ENCODE measurements at regions of chr20 and their contacts with region 1.

Region 1: DNA sequence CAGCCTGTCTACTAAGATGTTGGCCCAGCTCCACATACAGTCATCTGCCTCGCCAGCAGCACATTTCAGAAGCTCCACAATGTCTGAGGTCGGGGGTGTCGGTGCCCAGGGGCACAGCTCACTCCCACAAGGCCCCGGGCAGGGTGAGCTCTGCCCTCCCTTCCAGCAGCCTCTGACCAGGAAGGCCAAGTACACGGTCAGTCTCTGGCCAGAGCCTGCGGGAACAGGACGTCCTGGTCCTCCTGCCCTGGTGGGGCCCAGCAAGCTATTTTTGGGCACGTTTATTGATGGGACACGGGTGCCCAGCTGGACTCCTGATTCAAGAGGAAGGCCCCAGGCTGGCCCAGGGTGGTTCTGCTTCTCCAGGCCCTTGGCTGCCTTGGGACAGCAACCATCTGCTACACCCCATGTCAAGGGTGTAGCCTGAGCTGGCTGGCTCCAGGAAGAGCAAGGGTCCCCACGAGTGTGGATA is 114.9 kb upstream of the PTPN1 start:
- DNase-seq: peak; percentile 86 to 94
- ATAC-seq: peak; percentile 88
- H3K4me3 ChIP-seq: no peak overlapping the region
- H3K27ac ChIP-seq: peak overlapping the region; percentile 93 to 99
- H3K4me1 ChIP-seq: peaks cover 0 to 5% of the 10 kb centered on the region in 2 donors
- H3K27me3 ChIP-seq: no peaks in the 10 kb centered on the region

Region 2: DNA sequence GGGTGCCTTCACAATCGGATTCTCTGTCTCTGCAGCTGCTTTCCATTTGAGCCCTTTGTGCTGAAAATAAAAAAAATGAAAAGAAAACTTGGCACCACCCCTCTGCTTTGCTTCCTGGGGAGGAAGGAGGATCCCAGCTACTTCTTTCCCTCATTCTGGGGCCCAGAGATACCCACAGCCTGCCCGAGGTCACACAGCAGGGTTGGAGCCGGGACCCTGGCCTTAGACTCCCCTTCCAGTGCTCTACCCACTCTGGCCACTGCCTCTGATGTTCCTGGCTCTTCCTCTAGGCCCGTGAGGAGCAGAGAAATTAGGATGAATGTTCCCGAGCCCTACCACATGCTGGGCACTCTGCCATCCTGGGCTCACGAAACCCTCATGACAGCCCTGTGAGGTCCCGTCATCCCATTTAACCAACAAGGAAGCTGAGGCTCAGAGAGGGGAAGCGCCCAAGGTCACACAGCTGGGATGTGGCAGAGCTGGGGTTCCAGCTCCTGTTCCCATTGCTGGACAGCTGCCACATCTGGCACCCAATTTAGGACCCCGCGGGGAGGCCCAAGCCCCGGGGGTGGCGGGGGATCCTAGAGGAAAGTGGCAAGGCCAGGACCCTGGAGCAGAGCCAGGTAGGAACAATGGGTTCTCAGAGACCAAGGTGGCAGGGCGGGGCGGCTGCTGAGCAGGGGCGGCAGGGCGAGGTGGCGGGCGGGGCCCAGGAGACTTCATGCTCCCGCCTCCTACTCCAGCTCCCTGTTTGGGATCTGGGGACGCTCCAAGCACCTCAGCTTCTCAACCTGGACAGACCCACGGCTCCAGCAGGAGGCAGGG is 128.0 kb before region 1 on chr20:
- intact Hi-C with region 1: no loop called
- DNase-seq: peak in 1 of 2 donors; percentile 89
- ATAC-seq: no peak
- H3K4me3 ChIP-seq: no peak overlapping the region
- H3K27ac ChIP-seq: no peak overlapping the region
- H3K4me1 ChIP-seq: no peaks in the 10 kb centered on the region
- H3K27me3 ChIP-seq: no peaks in the 10 kb centered on the region

Region 3: DNA sequence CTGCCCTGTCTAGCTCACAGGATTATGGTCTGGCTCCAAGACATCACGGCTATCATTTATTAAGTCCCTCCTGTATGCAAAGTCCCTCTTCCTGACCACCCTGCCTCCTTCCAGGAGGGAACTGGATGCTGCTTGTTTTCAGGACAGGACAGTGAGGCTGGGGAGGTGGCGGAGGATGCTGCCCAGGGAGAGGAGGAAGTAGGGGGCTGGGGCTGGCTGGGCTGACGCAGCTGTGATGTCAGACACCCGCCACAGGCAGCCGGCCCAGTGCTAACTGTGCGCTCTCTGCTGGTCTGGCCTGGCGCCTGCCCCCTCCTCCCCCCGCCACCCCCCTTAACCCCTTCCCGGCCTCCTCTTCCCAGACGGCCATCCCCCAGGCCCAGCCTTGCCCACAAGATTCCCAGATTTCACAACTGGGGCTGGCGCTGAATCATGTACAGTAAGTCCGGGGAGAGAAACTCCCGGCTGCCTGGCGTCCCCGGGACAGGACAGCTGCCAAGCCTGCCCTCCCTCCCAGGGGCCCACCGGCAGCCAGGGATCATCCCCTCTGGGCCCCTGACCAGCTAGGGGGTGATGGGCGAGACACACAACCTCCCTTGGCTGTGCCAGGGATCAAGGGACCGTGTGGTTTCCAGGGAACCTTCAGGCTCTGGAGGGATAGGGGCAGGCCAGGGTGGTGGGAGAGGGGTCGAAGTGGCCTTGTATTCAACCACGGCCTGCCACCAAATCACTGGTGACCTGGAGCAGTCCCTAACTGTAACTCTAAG is 86.6 kb before region 1 on chr20:
- intact Hi-C with region 1: loop called (anchors 2 to 5 kb)
- DNase-seq: peak; percentile 95 to 96
- ATAC-seq: peak; percentile 87
- H3K4me3 ChIP-seq: no peak overlapping the region
- H3K27ac ChIP-seq: peak overlapping the region; percentile 40 to 77
- H3K4me1 ChIP-seq: no peaks in the 10 kb centered on the region
- H3K27me3 ChIP-seq: no peaks in the 10 kb centered on the region

Region 4: GRCh38 chr20:50460460-50461267 is 65.4 kb after region 1 on chr20:
- intact Hi-C with region 1: loop called in 1 of 2 experiments (anchors 5 kb)
- DNase-seq: peak; percentile 92 to 97
- ATAC-seq: peak; percentile 95
- H3K4me3 ChIP-seq: no peak overlapping the region
- H3K27ac ChIP-seq: no peak overlapping the region
- H3K4me1 ChIP-seq: no peaks in the 10 kb centered on the region
- H3K27me3 ChIP-seq: no peaks in the 10 kb centered on the region

Region 5: DNA sequence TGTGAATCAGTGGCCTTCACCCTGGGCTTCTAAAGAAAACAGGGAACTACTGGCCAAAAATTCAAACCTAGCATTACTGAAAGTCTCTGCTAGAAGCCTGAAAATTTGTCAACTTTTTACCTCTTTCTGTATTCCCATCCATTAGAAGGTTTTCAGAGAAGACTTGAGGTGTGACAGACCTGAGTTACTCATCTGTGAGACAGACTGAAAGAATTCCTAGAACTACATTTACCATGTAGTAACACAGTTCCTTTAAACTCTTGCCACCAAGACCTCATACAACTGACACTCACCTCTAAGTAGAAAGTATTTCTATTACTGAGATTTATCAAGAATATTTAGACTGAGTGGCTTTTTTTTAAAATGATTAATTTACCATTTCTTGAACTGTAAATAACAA is 558.5 kb after region 1 on chr20:
- intact Hi-C with region 1: no loop called
- DNase-seq: no peak
- ATAC-seq: no peak
- H3K4me3 ChIP-seq: no peak overlapping the region
- H3K27ac ChIP-seq: no peak overlapping the region
- H3K4me1 ChIP-seq: no peaks in the 10 kb centered on the region
- H3K27me3 ChIP-seq: no peaks in the 10 kb centered on the region